ENCODE measurements at regions of chr1 and their contacts with region 1.

Region 1: GRCh38 chr1:209989525-209989924 is 51.5 kb downstream of the SYT14 start:
- DNase-seq: no peak
- ATAC-seq: no peak

Region 2: DNA sequence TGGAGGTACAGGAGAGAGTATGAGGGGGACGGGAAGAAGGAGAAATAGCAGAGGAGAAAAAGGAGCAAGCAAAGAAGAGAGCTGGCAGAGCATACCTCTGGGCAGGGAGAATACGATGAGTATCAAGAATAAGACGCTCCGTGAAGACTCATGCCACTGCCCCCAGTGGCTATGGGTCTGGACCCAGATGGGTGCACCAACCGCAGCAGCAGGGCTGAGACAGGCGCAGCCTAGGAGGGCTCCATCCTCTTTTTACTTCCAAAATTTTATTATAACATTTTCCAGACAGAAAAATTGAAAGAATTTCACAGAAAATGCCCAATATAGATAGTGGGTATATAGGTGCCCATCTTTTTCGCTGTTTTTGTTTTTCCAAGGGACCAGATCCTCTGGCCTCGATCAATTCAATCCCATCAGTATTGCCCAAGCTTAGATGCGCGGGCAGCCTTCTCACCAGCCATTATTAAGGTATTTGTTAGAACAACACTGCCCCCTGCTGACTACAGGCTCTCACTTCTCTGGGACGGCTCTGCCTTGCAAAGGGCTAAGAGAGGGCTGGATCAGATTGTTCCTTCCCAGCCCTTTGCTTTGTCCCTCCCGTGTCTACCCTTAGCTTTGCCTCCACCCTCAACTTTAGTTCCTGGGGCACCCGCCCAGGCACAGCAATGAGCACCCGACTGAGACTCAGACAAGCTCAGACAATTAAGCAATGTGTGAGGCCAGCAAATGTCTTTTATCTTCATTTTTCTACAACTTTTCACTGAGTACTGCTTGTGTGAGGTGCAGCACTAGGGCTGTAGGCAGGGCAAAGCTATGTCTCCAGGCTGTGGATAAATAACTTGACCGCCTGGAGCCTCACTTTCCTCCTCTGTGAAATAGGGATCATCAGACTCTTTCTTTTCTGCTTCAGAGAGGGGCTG is 423.5 kb before region 1 on chr1:
- intact Hi-C with region 1: loop called (anchors 10 kb)
- DNase-seq: no peak
- ATAC-seq: peak; percentile 69

Region 3: DNA sequence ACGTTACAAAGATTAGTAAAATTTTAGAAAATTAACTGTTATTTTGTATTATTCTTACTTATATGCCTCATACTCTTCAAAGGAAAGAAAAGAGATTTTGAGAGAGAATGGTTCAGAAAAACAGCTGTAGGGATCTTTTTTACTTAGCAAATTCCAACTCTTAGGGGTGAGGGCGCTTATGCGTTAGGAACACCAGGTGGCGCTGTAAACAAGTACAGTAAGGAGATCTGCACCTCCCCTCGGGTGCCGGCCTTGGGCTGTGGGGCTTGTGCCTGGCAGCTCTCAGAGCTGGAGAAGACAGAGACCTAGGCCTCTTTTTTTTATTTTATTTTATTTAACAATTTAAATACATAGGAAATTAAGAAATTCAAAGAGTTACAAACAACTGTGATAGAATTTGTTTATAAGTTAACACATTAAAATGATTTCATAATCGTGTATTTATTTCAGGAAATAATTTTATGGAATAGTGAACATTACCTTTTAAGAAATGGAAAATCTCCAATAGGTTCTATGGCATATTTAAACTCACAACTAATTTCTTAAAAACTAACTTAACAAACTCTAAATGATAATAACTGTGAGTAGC is 129.1 kb before region 1 on chr1:
- intact Hi-C with region 1: loop called (anchors 2 kb)
- DNase-seq: peak; percentile 81
- ATAC-seq: peak; percentile 59

Region 4: GRCh38 chr1:210072129-210072528 is 82.6 kb after region 1 on chr1:
- intact Hi-C with region 1: no loop called
- DNase-seq: no peak
- ATAC-seq: no peak

Measured in Right ventricle myocardium inferior (tissue), 1 donor.